A673 (cell line): ENCODE measurements at regions of chr1 and their contacts with region 1.

Region 1: GRCh38 chr1:186605762-186606350 is 74.4 kb downstream of the PTGS2 start:
- DNase-seq: peak; percentile 90
- H3K4me3 ChIP-seq: no peak overlapping the region
- H3K27ac ChIP-seq: no peak overlapping the region
- H3K4me1 ChIP-seq: peaks cover 6% of the 10 kb centered on the region
- H3K27me3 ChIP-seq: no peaks in the 10 kb centered on the region
- CTCF ChIP-seq: peak; percentile 94

Region 2: DNA sequence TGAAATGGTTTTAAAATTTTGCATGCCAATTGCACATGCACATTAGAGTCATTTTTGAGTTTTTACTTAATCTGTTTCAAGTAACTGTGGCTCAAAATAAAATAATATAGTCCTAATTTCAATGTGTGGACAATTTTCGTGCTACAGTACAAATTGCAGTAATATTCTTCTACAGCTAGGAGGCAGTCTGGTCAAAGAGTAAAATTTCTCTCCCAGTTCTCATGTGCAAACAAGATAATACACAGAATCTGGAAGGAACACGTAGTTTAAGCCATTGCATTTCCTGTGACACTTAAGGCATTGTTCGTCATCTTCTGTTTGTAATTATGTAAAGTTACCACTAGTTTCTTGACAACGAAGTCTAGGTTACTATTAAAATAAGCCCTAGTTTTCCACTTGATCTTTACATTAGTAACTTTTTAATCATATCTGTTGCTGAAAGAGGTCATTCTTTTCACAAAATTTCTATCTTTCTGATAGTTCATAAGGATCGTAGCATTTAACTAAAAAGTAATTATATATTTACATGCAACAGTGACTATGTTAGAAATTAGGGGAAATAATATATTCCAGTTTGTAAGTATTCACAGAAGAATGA is 201.3 kb before region 1 on chr1:
- CTCF ChIA-PET with region 1: no interaction called
- POLR2A ChIA-PET with region 1: no interaction called
- intact Hi-C with region 1: loop called (anchors 5 kb)
- DNase-seq: peak; percentile 90
- H3K4me3 ChIP-seq: no peak overlapping the region
- H3K27ac ChIP-seq: no peak overlapping the region
- H3K4me1 ChIP-seq: peaks cover 6% of the 10 kb centered on the region
- H3K27me3 ChIP-seq: no peaks in the 10 kb centered on the region
- CTCF ChIP-seq: peak; percentile 89

Region 3: GRCh38 chr1:186482661-186483255 is 123.1 kb before region 1 on chr1:
- CTCF ChIA-PET with region 1: interaction called, 4 read pairs
- POLR2A ChIA-PET with region 1: no interaction called
- intact Hi-C with region 1: loop called (anchors 1 kb)
- DNase-seq: peak; percentile 88
- H3K4me3 ChIP-seq: no peak overlapping the region
- H3K27ac ChIP-seq: peak overlapping the region; percentile 11
- H3K4me1 ChIP-seq: peaks cover 10% of the 10 kb centered on the region
- H3K27me3 ChIP-seq: no peaks in the 10 kb centered on the region
- CTCF ChIP-seq: peak; percentile 99

Region 4: GRCh38 chr1:186680245-186681061 is 74.6 kb after region 1 on chr1 and contains the start of gene PTGS2:
- CTCF ChIA-PET with region 1: interaction called, 8 read pairs
- POLR2A ChIA-PET with region 1: no interaction called
- intact Hi-C with region 1: loop called (anchors 5 kb)
- DNase-seq: peak; percentile 96
- H3K4me3 ChIP-seq: peak within 1 kb of the TSS; percentile 81
- H3K27ac ChIP-seq: peak within 1 kb of the TSS; percentile 92
- H3K4me1 ChIP-seq: peaks cover 21% of the 10 kb centered on the region
- H3K27me3 ChIP-seq: no peaks in the 10 kb centered on the region
- CTCF ChIP-seq: peak; percentile 78
- total RNA-seq, gene PTGS2: 4.3 and 5.8 TPM in 2 replicates

Region 5: DNA sequence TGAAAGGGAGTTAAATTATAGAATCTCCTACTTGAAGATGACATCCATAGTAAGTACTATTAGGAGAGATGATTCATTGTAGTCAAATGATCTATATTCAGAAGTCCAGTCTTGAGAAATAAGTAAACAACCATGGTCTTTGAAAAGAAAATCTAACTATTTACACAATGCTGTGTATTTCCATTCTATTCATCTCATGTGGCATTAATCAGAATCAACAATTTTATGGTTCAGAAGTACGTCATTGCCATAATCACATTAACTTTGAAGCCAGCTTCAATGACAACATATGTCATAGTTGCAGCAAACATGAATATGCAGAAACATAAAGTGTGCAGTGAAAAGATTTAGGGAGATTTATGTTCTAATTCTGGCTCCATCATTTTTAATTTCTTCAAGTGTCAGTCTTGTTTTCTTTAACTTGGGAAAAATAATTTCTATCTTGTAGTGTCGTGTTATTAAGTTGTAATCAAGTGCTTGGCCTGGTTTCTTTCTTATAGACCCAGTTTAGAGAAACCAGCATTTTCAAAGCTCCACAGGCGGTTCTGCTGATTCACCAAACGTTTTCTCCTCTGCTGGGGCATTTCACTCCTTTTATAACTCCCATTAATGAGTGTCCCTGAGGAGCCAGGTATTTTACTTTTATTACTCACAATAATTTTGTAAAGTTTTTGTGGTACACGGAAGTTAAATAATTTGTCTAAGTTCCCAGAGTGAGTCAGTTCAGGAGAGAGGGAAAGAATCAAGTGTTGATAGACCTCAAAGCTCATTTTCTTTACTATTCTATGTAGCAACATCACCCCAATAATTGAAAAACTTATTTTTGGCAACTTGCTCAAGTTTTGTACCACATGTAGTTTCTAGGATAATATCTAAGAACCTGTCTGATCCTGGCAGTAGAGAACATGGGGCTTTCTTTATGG is 110.3 kb after region 1 on chr1:
- CTCF ChIA-PET with region 1: no interaction called
- POLR2A ChIA-PET with region 1: no interaction called
- intact Hi-C with region 1: no loop called
- DNase-seq: peak; percentile 65
- H3K4me3 ChIP-seq: no peak overlapping the region
- H3K27ac ChIP-seq: peak overlapping the region; percentile 46
- H3K4me1 ChIP-seq: peaks cover 25% of the 10 kb centered on the region
- H3K27me3 ChIP-seq: no peaks in the 10 kb centered on the region
- CTCF ChIP-seq: no peak

Region 6: DNA sequence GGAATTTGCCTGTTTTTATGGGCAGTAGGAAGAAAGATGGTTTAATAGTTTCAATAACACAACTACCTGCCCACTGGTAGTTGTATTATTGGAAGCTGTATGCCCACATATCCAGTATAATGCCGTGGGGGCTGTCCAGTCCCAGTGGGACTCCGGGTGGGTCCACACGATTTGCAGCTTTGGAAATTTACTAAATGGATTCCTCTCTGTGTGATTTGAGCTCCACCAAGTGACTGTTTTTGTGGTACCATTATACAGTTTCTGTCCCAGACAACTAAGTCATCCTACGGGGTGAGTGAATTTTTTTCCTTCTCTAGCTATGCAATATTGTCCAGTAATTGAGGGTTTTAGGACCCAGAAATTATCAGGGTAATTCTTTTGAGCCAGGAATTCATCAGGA is 309.7 kb after region 1 on chr1:
- CTCF ChIA-PET with region 1: interaction called, 3 read pairs
- POLR2A ChIA-PET with region 1: no interaction called
- intact Hi-C with region 1: loop called (anchors 2 kb)
- DNase-seq: peak; percentile 26
- H3K4me3 ChIP-seq: no peak overlapping the region
- H3K27ac ChIP-seq: no peak overlapping the region
- H3K4me1 ChIP-seq: no peaks in the 10 kb centered on the region
- H3K27me3 ChIP-seq: no peaks in the 10 kb centered on the region
- CTCF ChIP-seq: peak; percentile 44; the same call in 1 of the 2 replicates

Region 7: GRCh38 chr1:186985889-186986491 is 380.1 kb after region 1 on chr1:
- CTCF ChIA-PET with region 1: interaction called, 4 read pairs
- POLR2A ChIA-PET with region 1: no interaction called
- intact Hi-C with region 1: loop called (anchors 1 kb)
- DNase-seq: peak; percentile 82
- H3K4me3 ChIP-seq: no peak overlapping the region
- H3K27ac ChIP-seq: no peak overlapping the region
- H3K4me1 ChIP-seq: peaks cover 4% of the 10 kb centered on the region
- H3K27me3 ChIP-seq: no peaks in the 10 kb centered on the region
- CTCF ChIP-seq: peak; percentile 85

Region 8: DNA sequence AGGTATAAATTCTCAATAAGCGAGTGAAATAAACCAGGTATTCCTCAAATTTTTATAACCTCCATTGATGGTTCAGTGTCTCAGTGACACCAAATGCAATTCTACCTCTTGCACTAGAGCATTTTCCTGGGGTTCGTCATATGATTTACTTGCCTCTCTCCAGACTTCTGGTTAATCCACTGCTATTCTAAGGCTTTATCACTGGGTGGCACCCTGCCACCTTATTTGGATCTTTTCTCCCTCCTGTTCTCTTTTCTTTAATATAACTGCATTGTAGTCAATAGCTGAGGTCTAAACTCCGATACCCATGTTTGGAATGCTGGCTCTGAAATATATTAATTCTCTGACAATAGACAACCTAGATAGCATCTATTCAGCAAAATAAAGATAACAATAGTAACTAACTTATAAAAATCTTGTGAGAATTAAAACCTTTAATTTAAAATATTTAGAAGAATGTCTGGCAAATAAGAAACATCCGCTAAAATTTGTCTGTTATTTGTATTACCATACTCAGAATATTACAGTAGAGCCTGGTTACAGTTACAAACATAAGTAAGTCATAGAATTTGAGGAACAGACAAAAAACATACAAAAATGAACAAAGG is 659.2 kb after region 1 on chr1:
- CTCF ChIA-PET with region 1: no interaction called
- POLR2A ChIA-PET with region 1: no interaction called
- intact Hi-C with region 1: loop called (anchors 10 kb)
- DNase-seq: peak; percentile 80
- H3K4me3 ChIP-seq: no peak overlapping the region
- H3K27ac ChIP-seq: no peak overlapping the region
- H3K4me1 ChIP-seq: no peaks in the 10 kb centered on the region
- H3K27me3 ChIP-seq: no peaks in the 10 kb centered on the region
- CTCF ChIP-seq: peak; percentile 77